Endothelial cell of umbilical vein (primary cell): ENCODE measurements at regions of chr15 and their contacts with region 1.

Region 1: DNA sequence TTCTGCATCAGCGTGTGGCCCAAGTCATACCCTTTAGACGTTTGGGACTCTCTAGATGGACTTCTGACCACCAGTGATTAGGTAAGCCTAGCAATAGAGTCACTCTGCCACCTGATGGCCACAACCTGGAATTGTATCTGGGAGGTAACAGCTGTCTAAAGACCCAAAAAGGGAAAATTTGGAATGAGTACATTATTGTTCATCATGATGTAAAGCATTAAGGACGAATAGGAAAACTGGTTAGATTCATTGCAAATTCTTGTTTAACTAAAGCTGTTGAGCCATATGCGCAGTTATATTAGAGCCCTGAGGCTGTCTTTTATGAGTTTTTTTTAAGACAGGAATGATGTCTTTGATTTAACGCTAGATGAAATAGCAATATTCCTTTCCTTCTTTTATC is 63.6 kb downstream of the FAM81A start:
- DNase-seq: peak; percentile 72
- H3K4me3 ChIP-seq: no peak overlapping the region
- H3K27ac ChIP-seq: no peak overlapping the region
- H3K4me1 ChIP-seq: no peaks in the 10 kb centered on the region
- H3K27me3 ChIP-seq: peaks cover 4 to 6% of the 10 kb centered on the region in 2 experiments
- CTCF ChIP-seq: peak; percentile 54 to 66
- POLR2A ChIP-seq: no peak

Region 2: DNA sequence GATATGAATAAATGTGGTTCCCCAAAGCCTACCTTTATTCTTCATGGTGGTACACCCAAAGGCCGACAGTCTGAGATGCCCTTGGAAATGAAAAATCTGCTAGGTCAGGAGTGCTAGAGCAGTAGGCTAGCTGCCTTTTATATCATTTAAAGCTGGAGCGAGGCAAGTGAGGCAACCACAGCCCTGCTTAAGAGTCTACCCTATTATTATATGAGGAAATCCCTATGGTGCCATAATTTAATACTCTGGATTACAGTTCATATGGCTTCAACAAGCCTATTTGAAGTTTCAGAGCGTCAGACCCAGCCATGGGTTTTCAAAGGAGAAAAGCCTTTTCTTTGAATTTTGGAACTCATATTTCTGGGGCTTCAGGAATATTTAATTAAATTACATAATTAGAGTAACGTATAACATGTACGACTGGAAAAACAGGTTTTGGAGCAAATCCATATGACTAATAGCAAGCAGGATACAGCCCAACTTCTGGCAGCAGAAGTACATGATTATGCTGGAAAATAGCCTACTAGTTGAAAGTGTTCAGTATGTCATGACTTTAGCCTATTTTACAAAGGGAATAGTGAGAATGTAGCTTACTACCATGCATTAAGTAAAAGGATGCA is 550.1 kb before region 1 on chr15:
- CTCF ChIA-PET with region 1: interaction called, 12 read pairs
- POLR2A ChIA-PET with region 1: no interaction called
- dilution Hi-C with region 1: no loop called
- intact Hi-C with region 1: no loop called
- DNase-seq: peak; percentile 85
- H3K4me3 ChIP-seq: no peak overlapping the region
- H3K27ac ChIP-seq: no peak overlapping the region
- H3K4me1 ChIP-seq: peaks cover 14% of the 10 kb centered on the region
- H3K27me3 ChIP-seq: no peaks in the 10 kb centered on the region
- CTCF ChIP-seq: no peak
- POLR2A ChIP-seq: no peak

Region 3: GRCh38 chr15:59516655-59517461 is 15.3 kb after region 1 on chr15:
- CTCF ChIA-PET with region 1: interaction called, 16 read pairs
- POLR2A ChIA-PET with region 1: no interaction called
- dilution Hi-C with region 1: no loop called
- intact Hi-C with region 1: no loop called
- DNase-seq: no peak
- H3K4me3 ChIP-seq: no peak overlapping the region
- H3K27ac ChIP-seq: no peak overlapping the region
- H3K4me1 ChIP-seq: no peaks in the 10 kb centered on the region
- H3K27me3 ChIP-seq: peaks cover 0 to 2% of the 10 kb centered on the region in 2 experiments
- CTCF ChIP-seq: no peak
- POLR2A ChIP-seq: no peak

Region 4: DNA sequence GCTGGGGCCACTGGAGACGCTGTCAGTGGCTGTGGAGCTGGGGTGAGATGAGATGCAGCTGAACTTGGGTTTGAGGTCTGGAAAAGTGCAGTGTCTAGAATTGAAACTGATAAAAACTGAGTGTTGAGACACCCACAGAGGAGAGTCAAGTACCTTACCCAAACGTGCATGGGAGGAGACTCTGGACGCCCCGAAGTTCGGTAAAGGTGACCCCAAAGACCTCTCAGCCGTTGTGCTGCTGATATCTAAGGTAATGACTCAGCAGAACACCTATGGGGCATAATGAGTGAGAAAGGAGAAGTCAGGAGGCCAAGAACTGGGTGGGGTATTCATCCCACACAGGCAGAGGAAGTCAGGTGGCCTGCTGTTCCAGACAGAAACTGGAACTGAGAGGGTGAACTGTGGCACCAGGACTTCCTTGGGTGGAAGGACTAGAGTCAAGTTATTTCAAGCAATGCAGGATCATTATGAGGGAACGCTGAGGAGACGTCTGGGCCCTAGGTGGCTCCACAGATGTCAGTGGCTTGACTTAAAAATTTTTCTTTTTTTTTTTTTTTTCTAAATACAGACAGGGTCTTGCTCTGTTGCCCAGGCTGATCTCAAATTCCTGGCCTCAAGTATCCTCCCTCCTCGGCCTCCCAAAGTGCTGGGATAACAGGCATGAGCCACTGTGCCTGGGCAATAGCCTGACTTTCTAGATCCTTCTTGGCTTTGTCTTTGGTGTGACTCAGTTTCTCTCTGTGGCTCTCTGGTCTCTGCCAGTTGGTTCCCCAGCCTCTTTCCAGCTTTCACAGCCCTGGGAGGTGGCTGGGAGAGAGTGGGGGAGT is 42.3 kb after region 1 on chr15:
- CTCF ChIA-PET with region 1: no interaction called
- POLR2A ChIA-PET with region 1: no interaction called
- dilution Hi-C with region 1: no loop called
- intact Hi-C with region 1: no loop called
- DNase-seq: no peak
- H3K4me3 ChIP-seq: no peak overlapping the region
- H3K27ac ChIP-seq: no peak overlapping the region
- H3K4me1 ChIP-seq: no peaks in the 10 kb centered on the region
- H3K27me3 ChIP-seq: peaks cover 0 to 7% of the 10 kb centered on the region in 2 experiments
- CTCF ChIP-seq: no peak
- POLR2A ChIP-seq: no peak